H1 (cell line): ENCODE measurements at regions of chr10 and their contacts with region 1.

Region 1: GRCh38 chr10:35822316-35822715 is 180.2 kb upstream of the FZD8 start:
- DNase-seq: peak; percentile 31 to 74
- H3K4me3 ChIP-seq: no peak overlapping the region
- H3K27ac ChIP-seq: no peak overlapping the region
- H3K4me1 ChIP-seq: no peaks in the 10 kb centered on the region
- H3K27me3 ChIP-seq: no peaks in the 10 kb centered on the region
- CTCF ChIP-seq: peak; percentile 57 to 74 (median 61)
- EP300 ChIP-seq: no peak
- POLR2A ChIP-seq: no peak
- RAD21 ChIP-seq: peak; percentile 44 to 68

Region 2: DNA sequence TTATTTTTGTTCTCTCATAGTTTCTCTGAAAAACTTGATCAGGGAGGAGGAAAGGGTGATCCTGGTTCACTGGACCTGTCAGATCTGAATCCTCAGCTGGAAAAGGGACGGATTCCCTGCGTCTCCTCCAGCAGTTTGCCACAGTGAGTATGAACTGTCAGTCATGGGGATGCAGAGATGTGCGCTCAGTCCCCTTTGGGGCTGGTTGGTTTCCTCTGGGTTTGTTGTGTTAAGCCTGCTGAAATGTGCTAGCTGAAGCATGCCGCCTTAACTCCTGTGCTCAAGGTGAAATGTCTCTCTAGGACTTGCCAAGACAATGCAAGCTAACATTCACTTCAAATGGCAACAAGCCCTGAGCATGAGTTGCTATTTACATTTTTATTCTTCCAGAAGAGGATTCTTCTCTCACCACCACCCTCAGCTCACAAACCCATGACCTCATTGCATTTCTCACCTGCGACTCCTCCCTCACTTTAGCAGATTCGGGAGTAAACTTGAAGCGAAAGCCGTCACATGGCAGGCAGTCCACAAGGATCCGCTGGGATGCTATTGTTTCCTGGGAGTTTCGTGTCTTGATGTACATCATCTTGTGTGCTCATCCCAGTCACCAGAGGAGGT is 12.7 kb after region 1 on chr10:
- CTCF ChIA-PET with region 1: interaction called, 22 read pairs
- POLR2A ChIA-PET with region 1: no interaction called
- DNase-seq: no peak
- H3K4me3 ChIP-seq: no peak overlapping the region
- H3K27ac ChIP-seq: no peak overlapping the region
- H3K4me1 ChIP-seq: peaks cover 0 to 5% (median 2%) of the 10 kb centered on the region in 4 experiments; a peak in 3 of 7 replicates
- H3K27me3 ChIP-seq: no peaks in the 10 kb centered on the region
- CTCF ChIP-seq: no peak
- EP300 ChIP-seq: no peak
- POLR2A ChIP-seq: no peak
- RAD21 ChIP-seq: no peak

Region 3: DNA sequence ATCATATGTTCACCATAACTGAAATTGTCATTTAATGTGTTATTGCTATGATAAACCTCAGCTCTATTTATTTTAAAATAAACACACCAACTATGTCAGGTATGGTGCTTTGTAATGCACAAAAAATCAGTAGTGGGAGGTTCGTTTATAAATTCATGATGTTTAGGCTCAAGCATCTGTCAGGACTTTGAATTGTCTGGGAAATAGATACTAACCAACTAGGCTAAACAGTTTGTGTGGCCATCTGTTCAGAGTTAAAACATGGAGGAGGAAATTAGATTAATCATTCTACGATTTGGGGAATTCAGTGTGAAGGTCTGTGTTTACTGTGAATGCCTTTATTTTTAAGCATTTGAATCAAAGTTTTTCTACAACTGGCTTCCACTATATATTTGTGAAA is 32.3 kb after region 1 on chr10:
- CTCF ChIA-PET with region 1: no interaction called
- POLR2A ChIA-PET with region 1: no interaction called
- DNase-seq: no peak
- H3K4me3 ChIP-seq: no peak overlapping the region
- H3K27ac ChIP-seq: no peak overlapping the region
- H3K4me1 ChIP-seq: no peaks in the 10 kb centered on the region
- H3K27me3 ChIP-seq: no peaks in the 10 kb centered on the region
- CTCF ChIP-seq: no peak
- EP300 ChIP-seq: no peak
- POLR2A ChIP-seq: no peak
- RAD21 ChIP-seq: no peak